A673 (cell line): ENCODE measurements at regions of chrX and their contacts with region 1.

Region 1: GRCh38 chrX:46400530-46401443 is 144.4 kb downstream of the ZNF674 start:
- DNase-seq: no peak
- H3K4me3 ChIP-seq: no peak overlapping the region
- H3K27ac ChIP-seq: no peak overlapping the region
- H3K4me1 ChIP-seq: peaks cover 4% of the 10 kb centered on the region
- H3K27me3 ChIP-seq: no peaks in the 10 kb centered on the region
- CTCF ChIP-seq: no peak

Region 2: GRCh38 chrX:46310815-46311497 is 89.8 kb before region 1 on chrX:
- CTCF ChIA-PET with region 1: no interaction called
- POLR2A ChIA-PET with region 1: interaction called, 12 read pairs
- intact Hi-C with region 1: no loop called
- DNase-seq: no peak
- H3K4me3 ChIP-seq: no peak overlapping the region
- H3K27ac ChIP-seq: peak overlapping the region; percentile 87
- H3K4me1 ChIP-seq: peaks cover 22% of the 10 kb centered on the region
- H3K27me3 ChIP-seq: no peaks in the 10 kb centered on the region
- CTCF ChIP-seq: no peak

Region 3: GRCh38 chrX:46574774-46575381 is 174.1 kb after region 1 on chrX:
- CTCF ChIA-PET with region 1: no interaction called
- POLR2A ChIA-PET with region 1: no interaction called
- intact Hi-C with region 1: no loop called
- DNase-seq: peak; percentile 19
- H3K4me3 ChIP-seq: peak overlapping the region; percentile 58
- H3K27ac ChIP-seq: no peak overlapping the region
- H3K4me1 ChIP-seq: peaks cover 30% of the 10 kb centered on the region
- H3K27me3 ChIP-seq: no peaks in the 10 kb centered on the region
- CTCF ChIP-seq: no peak